ENCODE measurements at regions of chr19 and their contacts with region 1.

Region 1: GRCh38 chr19:34480971-34481821 is at the start of gene WTIP:
- DNase-seq: peak; percentile 73 to 81
- H3K4me3 ChIP-seq: peak within 1 kb of the TSS; percentile 38 to 82
- H3K27ac ChIP-seq: peak within 1 kb of the TSS; percentile 75 to 87
- H3K4me1 ChIP-seq: peaks cover 0 to 16% of the 10 kb centered on the region in 2 donors
- H3K27me3 ChIP-seq: no peaks in the 10 kb centered on the region
- CTCF ChIP-seq: peak in 1 of 4 experiments; percentile 3
- POLR2A ChIP-seq: peak; percentile 43 to 54
- total RNA-seq, gene WTIP: 5.9 to 38.0 (median 19.3) TPM

Region 2: GRCh38 chr19:34430738-34431625 is 50.2 kb before region 1 on chr19:
- intact Hi-C with region 1: loop called (anchors 10 kb)
- DNase-seq: no peak
- H3K4me3 ChIP-seq: no peak overlapping the region
- H3K27ac ChIP-seq: peak overlapping the region; percentile 33 to 85
- H3K4me1 ChIP-seq: peaks cover 2 to 3% of the 10 kb centered on the region in 2 donors
- H3K27me3 ChIP-seq: no peaks in the 10 kb centered on the region
- CTCF ChIP-seq: peak; percentile 34 to 54 (median 42)
- POLR2A ChIP-seq: no peak

Region 3: GRCh38 chr19:34523408-34523807 is 42.2 kb after region 1 on chr19:
- intact Hi-C with region 1: no loop called
- DNase-seq: no peak
- H3K4me3 ChIP-seq: no peak overlapping the region
- H3K27ac ChIP-seq: no peak overlapping the region
- H3K4me1 ChIP-seq: no peaks in the 10 kb centered on the region
- H3K27me3 ChIP-seq: no peaks in the 10 kb centered on the region
- CTCF ChIP-seq: no peak
- POLR2A ChIP-seq: no peak

Measured in uterus (tissue), 4 donors.